Posterior cingulate gyrus (tissue), 11 donors: ENCODE measurements at regions of chr21 and their contacts with region 1.

Region 1: DNA sequence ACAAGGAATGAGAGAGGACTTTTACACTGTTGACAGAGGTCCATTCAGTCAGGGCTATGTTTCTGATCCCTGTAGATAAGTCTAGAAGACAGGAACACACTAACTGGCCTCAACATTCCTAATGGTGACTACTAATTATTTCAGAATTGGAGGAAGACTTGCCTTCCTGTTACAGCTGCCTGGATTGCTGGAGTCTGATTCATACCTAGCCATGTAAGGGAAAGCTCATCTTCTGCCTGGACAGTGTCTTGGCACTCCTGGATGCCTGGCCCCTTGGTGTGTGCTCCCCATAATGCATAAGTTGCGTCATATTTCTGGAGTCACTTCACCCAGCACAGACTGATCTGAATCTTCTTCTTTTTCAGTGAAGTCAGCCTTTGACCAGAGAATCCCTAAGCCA is 326.0 kb upstream of the RUNX1 start:
- DNase-seq: no peak

Region 2: GRCh38 chr21:35324372-35325220 is 50.5 kb before region 1 on chr21:
- intact Hi-C with region 1: loop called (anchors 5 kb)
- DNase-seq: no peak